AG04449 (cell line): ENCODE measurements at regions of chr2 and their contacts with region 1.

Region 1: DNA sequence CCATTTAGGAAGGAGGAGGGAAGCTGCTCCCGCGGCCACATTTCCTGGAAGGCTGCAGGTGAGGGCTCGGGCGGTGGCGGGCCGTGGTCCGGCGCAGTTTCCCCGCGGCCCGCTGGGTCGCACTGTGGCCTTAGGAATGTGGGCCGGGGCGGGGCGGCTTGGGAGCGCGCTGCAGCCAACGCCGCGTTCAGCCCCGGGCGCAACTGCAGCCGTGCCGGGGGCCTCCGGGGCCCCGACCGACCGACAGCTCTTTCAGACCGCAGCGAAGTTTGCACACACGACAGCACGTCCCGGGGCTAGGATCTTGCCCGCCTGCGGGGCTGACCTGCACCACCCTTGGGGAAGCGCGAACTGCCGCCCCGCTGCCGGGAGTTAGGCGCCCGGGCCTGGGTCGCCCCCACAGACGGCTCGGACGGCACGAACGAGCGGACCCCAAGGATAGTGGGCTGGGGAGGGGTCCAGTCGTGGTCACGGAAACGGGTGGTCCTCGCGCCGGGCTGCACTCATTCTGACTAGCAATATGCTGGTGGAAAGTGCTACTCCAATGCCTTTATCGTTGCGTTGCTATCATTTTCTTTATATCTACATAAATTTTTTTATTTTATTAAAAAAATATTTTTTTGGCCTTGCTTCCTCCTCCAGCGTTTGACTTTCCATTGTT is 69.9 kb upstream of the DLX2 start:
- DNase-seq: no peak
- H3K4me3 ChIP-seq: peak overlapping the region; percentile 70
- CTCF ChIP-seq: peak; percentile 91

Region 2: DNA sequence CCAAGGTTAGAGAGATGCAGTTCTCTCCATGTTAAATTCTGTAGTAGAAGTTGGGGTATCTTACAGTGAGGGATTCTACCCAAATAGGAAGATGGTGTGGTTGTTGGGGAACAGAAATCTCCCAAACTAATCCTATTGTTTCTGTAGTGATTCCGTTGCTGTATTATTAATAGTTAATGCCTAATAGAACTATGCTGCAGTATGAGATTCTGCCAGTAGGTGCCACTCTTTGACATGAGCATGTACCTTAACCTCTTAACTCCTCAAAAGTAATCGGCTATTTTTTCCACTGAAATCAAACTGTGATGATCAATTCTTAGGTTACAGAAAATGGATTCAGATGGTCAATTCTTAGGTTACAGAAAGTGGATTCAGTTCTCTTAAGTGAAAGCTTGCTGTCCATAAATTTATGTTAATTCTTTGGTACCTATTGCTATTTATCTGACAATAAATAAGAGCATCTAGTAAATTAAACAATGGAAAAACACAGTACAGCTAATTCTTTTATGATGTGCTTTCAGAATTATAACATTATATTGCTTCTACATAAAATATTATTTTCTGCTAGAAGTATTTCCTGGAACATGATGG is 27.9 kb after region 1 on chr2:
- CTCF ChIA-PET with region 1: interaction called, 11 read pairs
- POLR2A ChIA-PET with region 1: no interaction called
- DNase-seq: no peak
- H3K4me3 ChIP-seq: no peak overlapping the region
- CTCF ChIP-seq: peak; percentile 38

Region 3: GRCh38 chr2:172472446-172473033 is 299.9 kb after region 1 on chr2:
- CTCF ChIA-PET with region 1: interaction called, 662 read pairs
- POLR2A ChIA-PET with region 1: no interaction called
- DNase-seq: no peak
- H3K4me3 ChIP-seq: no peak overlapping the region
- CTCF ChIP-seq: no peak

Region 4: GRCh38 chr2:172484253-172484652 is 311.6 kb after region 1 on chr2:
- CTCF ChIA-PET with region 1: interaction called, 40 read pairs
- POLR2A ChIA-PET with region 1: interaction called, 5 read pairs
- DNase-seq: no peak
- H3K4me3 ChIP-seq: no peak overlapping the region
- CTCF ChIP-seq: no peak